Activated CD4-positive, alpha-beta memory T cell treated with anti-CD3 and anti-CD28 coated beads for 36 hours (primary cell): ENCODE measurements at regions of chr2 and their contacts with region 1.

Region 1: GRCh38 chr2:99559075-99559662 is 69.4 kb upstream of the REV1 start:
- DNase-seq: peak; percentile 90
- H3K4me3 Mint-ChIP-seq: no peak overlapping the region
- H3K27ac Mint-ChIP-seq: no peak overlapping the region
- H3K4me1 Mint-ChIP-seq: peaks cover 4% of the 10 kb centered on the region
- H3K27me3 Mint-ChIP-seq: no peaks in the 10 kb centered on the region

Region 2: DNA sequence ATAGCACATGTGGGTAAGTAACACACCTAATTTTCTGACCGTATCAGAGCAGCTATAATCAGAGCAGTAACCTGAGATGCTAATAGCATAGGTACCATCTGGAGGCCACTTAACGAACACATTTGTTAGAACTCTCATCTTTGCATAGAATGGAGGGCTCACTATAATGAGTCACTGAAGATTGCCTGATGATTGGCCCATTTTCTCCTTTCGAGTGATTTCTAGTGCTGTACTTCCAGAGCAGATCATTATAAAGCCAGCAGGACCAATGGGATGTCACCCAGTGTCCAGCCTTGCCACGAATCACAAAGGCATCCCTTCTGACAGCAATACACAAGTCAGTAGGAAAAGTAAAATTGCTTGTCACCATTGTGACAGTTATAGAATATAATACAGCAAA is 12.4 kb after region 1 on chr2:
- CTCF ChIA-PET with region 1: interaction called, 13 read pairs
- POLR2A ChIA-PET with region 1: no interaction called
- intact Hi-C with region 1: no loop called
- DNase-seq: no peak
- H3K4me3 Mint-ChIP-seq: no peak overlapping the region
- H3K27ac Mint-ChIP-seq: no peak overlapping the region
- H3K4me1 Mint-ChIP-seq: no peaks in the 10 kb centered on the region
- H3K27me3 Mint-ChIP-seq: no peaks in the 10 kb centered on the region

Region 3: GRCh38 chr2:100242891-100243619 is 683.9 kb after region 1 on chr2:
- CTCF ChIA-PET with region 1: interaction called, 19 read pairs
- POLR2A ChIA-PET with region 1: no interaction called
- intact Hi-C with region 1: loop called (anchors 1 kb)
- DNase-seq: peak; percentile 67
- H3K4me3 Mint-ChIP-seq: no peak overlapping the region
- H3K27ac Mint-ChIP-seq: no peak overlapping the region
- H3K4me1 Mint-ChIP-seq: no peaks in the 10 kb centered on the region
- H3K27me3 Mint-ChIP-seq: peaks cover 6% of the 10 kb centered on the region

Region 4: GRCh38 chr2:100262555-100263320 is 703.6 kb after region 1 on chr2:
- CTCF ChIA-PET with region 1: interaction called, 15 read pairs
- POLR2A ChIA-PET with region 1: no interaction called
- intact Hi-C with region 1: loop called (anchors 5 kb)
- DNase-seq: peak; percentile 72
- H3K4me3 Mint-ChIP-seq: no peak overlapping the region
- H3K27ac Mint-ChIP-seq: no peak overlapping the region
- H3K4me1 Mint-ChIP-seq: no peaks in the 10 kb centered on the region
- H3K27me3 Mint-ChIP-seq: no peaks in the 10 kb centered on the region

Region 5: DNA sequence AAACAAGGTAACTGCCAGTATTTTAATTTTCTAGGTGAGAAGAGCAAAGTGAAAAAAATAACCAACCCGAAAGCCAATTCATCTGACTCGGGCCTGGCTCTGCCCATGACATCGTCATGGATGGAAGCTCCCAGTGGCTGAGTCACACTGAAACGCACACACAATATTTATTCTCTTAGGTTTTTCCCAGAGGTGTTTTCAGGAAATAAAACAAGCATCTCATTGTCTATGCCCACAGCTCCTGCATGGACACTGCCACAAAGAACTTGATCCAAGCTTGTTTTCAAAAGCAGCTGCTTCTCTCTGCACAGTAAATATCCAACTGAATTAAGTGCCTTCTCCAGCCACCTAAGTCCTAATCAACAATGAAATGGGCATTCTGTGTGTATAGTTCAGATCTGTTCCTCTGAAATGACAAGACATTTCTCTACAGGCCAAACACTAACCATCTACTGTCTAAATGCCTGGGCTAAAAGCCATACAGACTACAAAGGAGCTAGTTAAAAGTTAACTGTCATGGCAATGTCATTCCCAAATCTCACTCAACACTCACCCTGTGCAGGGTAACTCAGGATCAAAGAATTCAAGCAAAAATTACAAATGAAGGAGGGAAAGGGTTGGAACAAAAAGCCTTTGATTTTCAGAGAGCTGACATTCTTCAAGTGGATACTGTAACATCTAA is 1505.8 kb after region 1 on chr2:
- CTCF ChIA-PET with region 1: no interaction called
- POLR2A ChIA-PET with region 1: no interaction called
- intact Hi-C with region 1: loop called (anchors 10 kb)
- DNase-seq: no peak
- H3K4me3 Mint-ChIP-seq: no peak overlapping the region
- H3K27ac Mint-ChIP-seq: no peak overlapping the region
- H3K4me1 Mint-ChIP-seq: peaks cover 2% of the 10 kb centered on the region
- H3K27me3 Mint-ChIP-seq: no peaks in the 10 kb centered on the region